GM10248 (cell line): ENCODE measurements at regions of chr7 and their contacts with region 1.

Region 1: GRCh38 chr7:67391168-67391567 is 394.5 kb downstream of the TYW1 start:
- DNase-seq: no peak
- CTCF ChIP-seq: no peak

Region 2: GRCh38 chr7:67371429-67372305 is 19.5 kb before region 1 on chr7:
- CTCF ChIA-PET with region 1: interaction called, 10 read pairs
- POLR2A ChIA-PET with region 1: no interaction called
- DNase-seq: peak; percentile 84
- CTCF ChIP-seq: peak; percentile 85

Region 3: GRCh38 chr7:67377939-67378862 is 13.0 kb before region 1 on chr7:
- CTCF ChIA-PET with region 1: interaction called, 16 read pairs
- POLR2A ChIA-PET with region 1: no interaction called
- DNase-seq: peak; percentile 77
- CTCF ChIP-seq: peak; percentile 82

Region 4: GRCh38 chr7:67406976-67407375 is 15.8 kb after region 1 on chr7:
- CTCF ChIA-PET with region 1: no interaction called
- POLR2A ChIA-PET with region 1: no interaction called
- DNase-seq: no peak
- CTCF ChIP-seq: no peak

Region 5: GRCh38 chr7:67422596-67422995 is 31.4 kb after region 1 on chr7:
- CTCF ChIA-PET with region 1: no interaction called
- POLR2A ChIA-PET with region 1: no interaction called
- DNase-seq: no peak
- CTCF ChIP-seq: no peak